GM10248 (cell line): ENCODE measurements at regions of chr2 and their contacts with region 1.

Region 1: GRCh38 chr2:43484323-43484930 is 111.4 kb downstream of the THADA start:
- DNase-seq: no peak
- CTCF ChIP-seq: peak; percentile 38

Region 2: DNA sequence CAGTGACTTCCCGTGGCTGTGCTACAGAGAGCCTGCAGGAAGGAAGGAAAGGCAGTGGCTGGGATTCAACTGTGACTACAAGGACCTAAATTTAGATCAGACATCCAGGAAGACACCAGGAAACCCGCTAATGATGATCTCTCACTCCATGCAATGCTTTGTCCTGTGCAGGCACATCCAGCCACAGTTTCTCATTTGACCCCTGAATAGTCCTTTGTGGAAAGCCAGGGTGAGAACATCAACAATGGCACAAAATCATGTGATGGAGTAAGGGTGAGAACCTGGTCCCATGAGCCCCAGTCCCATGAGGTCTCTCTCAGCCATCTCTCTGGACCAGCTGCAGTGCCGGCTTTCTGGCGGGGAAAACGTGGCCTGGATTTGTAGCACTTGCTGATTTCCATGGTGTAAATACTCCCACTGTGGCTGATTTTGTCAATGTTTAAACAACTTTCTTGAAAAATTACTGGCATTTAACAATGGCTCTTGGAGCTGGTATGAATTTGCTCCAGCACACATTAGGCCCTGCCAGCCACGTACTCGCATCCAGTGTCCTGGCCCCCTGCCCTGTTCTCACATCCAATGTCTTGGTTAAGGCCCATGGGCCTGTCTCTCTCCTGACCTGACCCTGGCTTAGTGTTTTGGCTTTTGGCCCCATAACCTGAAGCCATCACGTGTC is 533.0 kb before region 1 on chr2:
- CTCF ChIA-PET with region 1: interaction called, 43 read pairs
- POLR2A ChIA-PET with region 1: no interaction called
- DNase-seq: no peak
- CTCF ChIP-seq: no peak

Region 3: DNA sequence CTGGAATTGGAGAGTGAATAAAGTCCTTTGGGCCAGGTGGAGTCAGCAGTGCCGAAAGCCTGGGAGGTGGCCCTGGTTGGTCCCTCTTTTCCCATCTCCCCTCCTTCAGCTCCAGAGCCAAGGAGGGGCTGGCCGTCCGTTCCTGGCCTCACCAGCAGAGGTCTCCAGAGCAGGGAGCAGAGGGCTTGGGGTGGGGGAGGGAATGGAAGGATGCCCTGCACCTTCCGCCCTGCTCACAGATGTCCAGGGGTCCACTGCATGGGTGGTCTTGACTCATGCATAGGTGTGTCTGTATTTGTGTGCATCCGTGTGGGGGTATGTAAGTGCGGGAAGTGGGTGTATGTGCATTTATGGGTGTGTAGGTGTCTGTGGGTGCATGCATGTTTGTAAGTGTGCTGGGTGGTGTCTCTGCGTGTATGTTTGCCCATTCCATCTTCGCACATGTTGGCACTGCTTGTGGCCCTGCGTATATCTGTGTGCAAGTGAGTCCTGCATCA is 459.9 kb before region 1 on chr2:
- CTCF ChIA-PET with region 1: interaction called, 15 read pairs
- POLR2A ChIA-PET with region 1: no interaction called
- DNase-seq: peak; percentile 59
- CTCF ChIP-seq: peak; percentile 76

Region 4: DNA sequence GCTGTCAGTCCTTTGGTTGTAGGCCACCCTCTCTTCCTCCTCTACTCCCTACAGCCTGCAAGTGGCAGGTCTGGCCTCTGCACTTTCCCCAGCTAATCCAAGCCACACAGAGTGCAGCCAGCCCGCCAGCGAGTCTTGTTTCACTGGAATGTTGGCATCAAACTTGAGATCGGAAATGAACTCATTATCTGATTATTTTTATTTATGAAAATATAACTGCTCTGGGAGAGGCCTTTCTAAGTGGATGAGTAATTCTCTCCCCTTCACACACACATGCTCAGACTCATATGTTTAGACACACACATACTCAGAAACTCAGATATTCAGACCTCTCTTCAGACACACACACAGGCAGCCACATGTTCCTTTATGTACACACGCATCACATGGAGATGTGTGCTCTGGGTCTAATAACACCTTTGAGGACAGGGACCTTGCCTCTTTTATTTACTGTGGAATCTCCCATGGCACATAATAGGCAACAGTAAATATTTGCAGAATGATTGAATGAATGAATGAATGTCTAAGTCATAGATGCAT is 409.3 kb before region 1 on chr2:
- CTCF ChIA-PET with region 1: no interaction called
- POLR2A ChIA-PET with region 1: no interaction called
- DNase-seq: no peak
- CTCF ChIP-seq: no peak

Region 5: DNA sequence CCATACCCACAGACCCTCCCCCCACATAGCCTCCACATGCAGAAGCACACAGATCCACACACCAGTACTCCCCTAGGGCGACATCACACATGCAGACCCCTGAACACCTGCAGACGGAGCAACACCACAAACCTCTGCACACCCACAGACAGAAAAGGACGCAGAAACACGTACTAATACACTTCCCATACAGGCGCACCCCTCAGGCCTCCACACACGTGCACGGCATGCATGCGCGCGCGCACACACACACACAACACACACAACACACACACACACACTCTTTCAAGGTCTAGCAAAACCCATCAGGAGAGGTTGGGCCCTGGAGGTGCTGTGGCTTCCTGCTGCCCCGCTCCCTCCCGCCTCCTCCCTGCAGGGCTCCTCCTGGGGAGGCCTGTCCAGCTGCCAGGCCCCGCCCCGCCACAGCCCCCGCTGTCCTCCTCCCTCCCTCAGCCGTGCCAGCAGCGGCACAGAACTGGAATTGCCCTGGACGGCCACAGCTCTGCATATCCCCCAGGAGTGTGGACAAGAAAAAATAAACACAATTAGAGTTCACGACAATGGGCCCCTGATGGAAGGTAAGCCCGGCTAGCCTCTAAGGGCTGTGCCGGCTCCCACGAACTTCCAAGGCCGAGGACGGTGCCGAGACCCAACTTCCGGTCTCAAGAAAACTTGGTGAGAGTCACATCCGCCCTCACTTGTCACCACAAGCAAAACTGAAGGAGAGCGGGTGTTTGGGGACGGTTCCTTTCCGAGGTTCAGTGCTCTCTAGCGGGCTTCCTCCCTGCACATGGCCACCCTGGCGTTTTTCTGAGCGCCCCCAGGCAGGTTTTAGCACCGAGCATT is 264.8 kb before region 1 on chr2:
- CTCF ChIA-PET with region 1: interaction called, 13 read pairs
- POLR2A ChIA-PET with region 1: no interaction called
- DNase-seq: peak; percentile 84
- CTCF ChIP-seq: no peak

Region 6: DNA sequence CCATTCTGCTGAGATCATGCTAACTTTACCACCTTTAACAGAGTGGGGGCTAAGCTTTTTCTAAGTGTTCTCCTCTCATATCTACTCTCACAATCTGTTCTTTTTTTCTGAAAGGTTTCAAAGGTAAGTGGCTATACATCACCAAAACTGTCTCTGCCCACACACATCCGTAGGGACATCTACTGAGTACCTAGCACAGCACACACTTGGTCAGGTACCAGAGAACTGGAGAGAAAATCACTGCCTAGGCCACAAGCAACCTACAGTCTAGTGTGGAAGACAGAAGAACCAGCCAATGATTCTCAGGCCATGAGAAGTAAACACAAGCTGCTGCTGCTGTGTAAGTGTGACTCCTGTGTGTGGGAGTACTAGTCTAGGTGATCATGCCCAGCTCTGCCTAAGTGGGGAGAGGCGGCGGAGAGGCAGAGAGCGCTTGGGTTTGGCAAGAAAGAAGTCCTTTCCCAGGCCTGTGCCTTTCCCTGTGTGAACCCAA is 81.9 kb before region 1 on chr2:
- CTCF ChIA-PET with region 1: interaction called, 28 read pairs
- POLR2A ChIA-PET with region 1: no interaction called
- DNase-seq: peak; percentile 39
- CTCF ChIP-seq: no peak

Region 7: DNA sequence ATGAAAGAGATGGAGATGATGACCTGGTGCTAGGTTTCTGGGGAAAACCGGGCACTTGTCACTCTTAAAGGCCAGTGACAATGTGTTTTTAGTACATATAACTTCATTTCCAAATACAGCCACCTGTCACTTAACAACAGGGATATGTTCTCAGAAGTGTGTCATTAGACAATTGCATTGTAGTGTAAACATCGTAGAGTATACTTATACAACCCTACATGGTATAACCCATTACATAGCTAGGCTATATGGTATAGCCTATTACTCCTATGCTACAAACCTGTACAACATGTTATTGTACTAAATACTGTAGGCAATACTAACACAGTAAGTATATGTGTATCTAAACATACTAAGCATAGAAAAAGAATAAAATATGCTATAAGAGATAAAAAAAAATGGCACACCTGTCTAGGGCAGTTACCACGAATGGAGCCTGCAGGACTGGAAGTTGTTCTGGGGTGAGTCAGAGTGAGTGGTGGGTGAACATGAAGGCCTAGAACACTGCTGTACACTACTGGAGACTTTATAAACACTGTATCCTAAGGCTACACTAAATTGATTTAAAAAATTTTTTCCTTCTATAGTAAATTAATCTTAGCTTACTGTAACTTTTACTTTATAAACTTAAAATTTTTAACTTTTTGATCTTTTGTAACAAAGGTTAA is 11.8 kb before region 1 on chr2:
- CTCF ChIA-PET with region 1: interaction called, 16 read pairs
- POLR2A ChIA-PET with region 1: no interaction called
- DNase-seq: no peak
- CTCF ChIP-seq: no peak